ENCODE measurements at regions of chr15 and their contacts with region 1.

Region 1: DNA sequence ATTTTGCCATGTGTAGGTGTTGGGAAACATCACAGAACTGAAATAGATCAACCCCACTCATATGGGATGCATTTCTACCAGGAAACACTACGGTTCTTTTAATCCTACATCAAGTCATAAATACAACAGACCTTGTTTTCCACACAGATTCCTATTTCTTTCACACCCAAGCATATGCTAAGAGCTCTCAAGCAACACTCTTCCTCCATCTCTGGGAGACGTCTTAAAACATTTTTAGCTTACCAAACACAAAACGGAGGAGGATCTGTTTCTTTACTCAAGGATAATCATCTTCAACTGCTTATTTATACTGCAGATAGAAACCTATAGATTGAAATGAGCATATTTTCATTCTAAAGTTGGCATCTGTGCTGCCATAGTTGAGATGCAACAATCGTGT is 5.1 kb downstream of the GJD2 start:
- DNase-seq: no peak
- ATAC-seq: no peak
- H3K4me3 ChIP-seq: no peak overlapping the region
- H3K27ac ChIP-seq: no peak overlapping the region
- H3K4me1 ChIP-seq: no peaks in the 10 kb centered on the region
- H3K27me3 ChIP-seq: peaks cover 0 to 17% of the 10 kb centered on the region in 2 experiments; a peak in 3 of 5 replicates
- CTCF ChIP-seq: no peak
- EP300 ChIP-seq: no peak
- POLR2A ChIP-seq: no peak
- RAD21 ChIP-seq: no peak

Region 2: GRCh38 chr15:34729886-34730285 is 19.8 kb before region 1 on chr15:
- CTCF ChIA-PET with region 1: no interaction called
- POLR2A ChIA-PET with region 1: no interaction called
- in situ Hi-C with region 1: no loop called
- intact Hi-C with region 1: loop called (anchors 2 kb)
- DNase-seq: no peak
- ATAC-seq: no peak
- H3K4me3 ChIP-seq: no peak overlapping the region
- H3K27ac ChIP-seq: no peak overlapping the region
- H3K4me1 ChIP-seq: no peaks in the 10 kb centered on the region
- H3K27me3 ChIP-seq: 0 out of 5 replicates have a peak, but pooled peaks cover 0 to 5% of the 10 kb centered on the region in 2 experiments
- CTCF ChIP-seq: no peak
- EP300 ChIP-seq: no peak
- POLR2A ChIP-seq: no peak
- RAD21 ChIP-seq: no peak

Measured in HepG2 (cell line).